H1 (cell line): ENCODE measurements at regions of chr3 and their contacts with region 1.

Region 1: GRCh38 chr3:187291512-187292132 is at the start of gene MASP1:
- DNase-seq: no peak
- H3K4me3 ChIP-seq: peak within 1 kb of the TSS; percentile 39 to 66 (median 59)
- H3K27ac ChIP-seq: no peak within 1 kb of the TSS
- H3K4me1 ChIP-seq: peaks cover 3 to 16% (median 10%) of the 10 kb centered on the region in 4 experiments; a peak in 6 of 7 replicates
- H3K27me3 ChIP-seq: peaks cover 0 to 3% (median 0%) of the 10 kb centered on the region in 4 experiments; a peak in 3 of 7 replicates
- CTCF ChIP-seq: no peak
- EP300 ChIP-seq: no peak
- POLR2A ChIP-seq: no peak
- RAD21 ChIP-seq: 0 out of 4 replicates have a peak, but pooled peaks of 1 of the 2 experiments have one; percentile 8
- total RNA-seq, gene MASP1: 2.7 and 3.2 TPM in 2 replicates

Region 2: GRCh38 chr3:187227658-187228258 is 63.9 kb before region 1 on chr3:
- CTCF ChIA-PET with region 1: interaction called, 86 read pairs
- POLR2A ChIA-PET with region 1: interaction called, 3 read pairs
- DNase-seq: no peak
- H3K4me3 ChIP-seq: no peak overlapping the region
- H3K27ac ChIP-seq: no peak overlapping the region
- H3K4me1 ChIP-seq: no peaks in the 10 kb centered on the region
- H3K27me3 ChIP-seq: no peaks in the 10 kb centered on the region
- CTCF ChIP-seq: no peak
- EP300 ChIP-seq: no peak
- POLR2A ChIP-seq: no peak
- RAD21 ChIP-seq: no peak

Region 3: DNA sequence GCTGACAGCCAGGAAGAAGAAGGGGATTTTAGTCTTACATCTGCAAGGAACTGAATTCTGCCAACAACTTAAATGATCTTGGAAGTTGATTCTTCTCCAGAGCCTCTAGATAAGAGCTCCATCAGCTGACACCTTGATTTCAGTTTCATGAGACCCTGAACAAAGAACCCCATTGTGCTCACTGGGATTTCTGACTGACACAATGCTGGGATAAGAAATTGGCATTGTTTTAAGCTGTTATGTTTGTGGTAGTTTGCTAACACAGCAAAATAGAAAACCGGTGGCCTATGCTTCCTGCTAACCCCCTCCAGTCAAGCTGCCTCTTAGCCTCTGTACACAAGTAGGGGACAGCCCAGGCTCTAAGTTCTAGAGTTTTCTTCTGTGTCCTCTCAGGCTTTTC is 36.3 kb before region 1 on chr3:
- CTCF ChIA-PET with region 1: interaction called, 30 read pairs
- POLR2A ChIA-PET with region 1: no interaction called
- DNase-seq: no peak
- H3K4me3 ChIP-seq: no peak overlapping the region
- H3K27ac ChIP-seq: no peak overlapping the region
- H3K4me1 ChIP-seq: peaks cover 0 to 3% (median 0%) of the 10 kb centered on the region in 4 experiments; a peak in 1 of 7 replicates
- H3K27me3 ChIP-seq: no peaks in the 10 kb centered on the region
- CTCF ChIP-seq: no peak
- EP300 ChIP-seq: no peak
- POLR2A ChIP-seq: no peak
- RAD21 ChIP-seq: no peak

Region 4: DNA sequence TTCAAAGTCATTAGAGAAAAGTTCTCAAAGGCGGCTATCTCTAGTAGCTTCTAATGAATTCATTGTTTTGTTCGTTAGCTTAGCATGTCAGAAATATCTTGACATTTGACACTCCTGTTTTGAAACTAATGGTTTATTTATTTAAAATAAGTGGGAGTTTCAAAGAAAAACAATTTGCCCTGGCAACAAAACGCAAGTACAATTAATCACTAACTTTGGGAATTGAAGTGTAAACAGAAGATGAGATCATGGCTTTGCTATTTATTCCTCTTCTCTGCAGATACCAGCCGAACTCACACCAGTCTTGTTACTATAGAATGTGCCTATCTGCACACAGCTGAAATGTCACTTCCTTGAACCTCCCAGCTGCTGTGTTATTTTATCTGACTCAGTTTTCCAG is 27.6 kb before region 1 on chr3:
- CTCF ChIA-PET with region 1: interaction called, 30 read pairs
- POLR2A ChIA-PET with region 1: no interaction called
- DNase-seq: no peak
- H3K4me3 ChIP-seq: no peak overlapping the region
- H3K27ac ChIP-seq: no peak overlapping the region
- H3K4me1 ChIP-seq: no peaks in the 10 kb centered on the region
- H3K27me3 ChIP-seq: no peaks in the 10 kb centered on the region
- CTCF ChIP-seq: no peak
- EP300 ChIP-seq: no peak
- POLR2A ChIP-seq: no peak
- RAD21 ChIP-seq: no peak

Region 5: GRCh38 chr3:187274977-187275338 is 16.7 kb before region 1 on chr3:
- CTCF ChIA-PET with region 1: interaction called, 23 read pairs
- POLR2A ChIA-PET with region 1: interaction called, 6 read pairs
- DNase-seq: peak; percentile 59 to 61
- H3K4me3 ChIP-seq: peak overlapping the region in 2 of 4 experiments; percentile 24 to 31; a peak in 4 of 8 replicates
- H3K27ac ChIP-seq: peak overlapping the region; percentile 51; the same call in 1 of the 2 replicates
- H3K4me1 ChIP-seq: peaks cover 7 to 20% (median 15%) of the 10 kb centered on the region in 4 experiments
- H3K27me3 ChIP-seq: no peaks in the 10 kb centered on the region
- CTCF ChIP-seq: no peak
- EP300 ChIP-seq: no peak
- POLR2A ChIP-seq: peak in 1 of 2 experiments; percentile 38; a peak in 1 of 3 replicates
- RAD21 ChIP-seq: no peak

Region 6: GRCh38 chr3:187305881-187306280 is 14.3 kb after region 1 on chr3:
- CTCF ChIA-PET with region 1: interaction called, 33 read pairs
- POLR2A ChIA-PET with region 1: no interaction called
- DNase-seq: no peak
- H3K4me3 ChIP-seq: no peak overlapping the region
- H3K27ac ChIP-seq: no peak overlapping the region
- H3K4me1 ChIP-seq: no peaks in the 10 kb centered on the region; a peak in 1 of 7 replicates
- H3K27me3 ChIP-seq: no peaks in the 10 kb centered on the region
- CTCF ChIP-seq: no peak
- EP300 ChIP-seq: no peak
- POLR2A ChIP-seq: no peak
- RAD21 ChIP-seq: no peak